ENCODE measurements at regions of chr12 and their contacts with region 1.

Region 1: DNA sequence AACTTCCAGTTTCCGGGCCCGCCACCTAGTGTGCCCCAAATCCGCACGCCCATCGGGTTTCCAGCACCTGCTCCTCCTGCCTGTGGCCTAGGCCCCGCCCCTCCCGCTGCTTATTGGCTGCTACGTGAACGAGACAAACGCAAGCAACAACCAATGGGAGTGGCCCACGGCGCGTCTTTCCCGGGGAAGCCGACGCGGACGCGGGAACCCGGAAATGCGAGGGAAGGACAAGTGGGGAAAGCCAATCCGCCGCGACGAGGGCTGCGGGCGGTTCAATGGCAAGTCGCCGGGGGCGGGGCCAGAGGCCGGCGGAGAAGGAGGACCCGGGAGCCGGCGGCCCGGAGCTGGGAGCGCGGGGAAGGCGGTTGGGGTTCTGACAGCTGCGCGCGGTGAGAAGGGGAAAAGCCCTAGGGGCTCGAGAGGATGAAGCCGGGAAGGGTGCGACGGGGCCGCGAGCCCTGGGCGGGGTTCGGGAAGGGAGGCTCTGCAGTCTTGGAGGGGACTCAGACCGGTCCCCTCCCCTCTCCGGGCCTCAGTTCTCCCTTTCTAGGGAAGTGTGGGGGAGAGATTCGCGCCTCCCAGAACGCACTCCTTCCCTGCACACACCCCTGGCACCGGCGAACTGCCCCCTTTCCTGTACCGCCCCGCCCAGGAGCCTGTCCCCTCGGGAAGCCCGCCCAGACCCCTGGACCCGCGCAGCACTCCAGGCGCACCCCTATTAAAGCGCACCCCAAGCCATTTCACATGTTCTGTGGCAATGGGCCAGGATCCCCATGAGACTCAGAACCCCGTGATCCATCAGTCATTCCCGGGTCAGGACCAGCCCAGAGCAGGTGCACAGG is at the start of gene FICD:
- DNase-seq: peak; percentile 100
- ATAC-seq: peak; percentile 95 to 98 (median 96)
- H3K4me3 ChIP-seq: peak within 1 kb of the TSS; percentile 61 to 97 (median 86)
- H3K27ac ChIP-seq: peak within 1 kb of the TSS in 11 of 12 donors; percentile 59 to 85 (median 76)
- H3K4me1 ChIP-seq: peaks cover 0 to 26% (median 10%) of the 10 kb centered on the region in 12 donors
- H3K27me3 ChIP-seq: no peaks in the 10 kb centered on the region
- CTCF ChIP-seq: no peak
- POLR2A ChIP-seq: peak in 1 of 2 donors; percentile 71
- total RNA-seq, gene FICD: 2.6 to 6.6 (median 3.5) TPM

Region 2: DNA sequence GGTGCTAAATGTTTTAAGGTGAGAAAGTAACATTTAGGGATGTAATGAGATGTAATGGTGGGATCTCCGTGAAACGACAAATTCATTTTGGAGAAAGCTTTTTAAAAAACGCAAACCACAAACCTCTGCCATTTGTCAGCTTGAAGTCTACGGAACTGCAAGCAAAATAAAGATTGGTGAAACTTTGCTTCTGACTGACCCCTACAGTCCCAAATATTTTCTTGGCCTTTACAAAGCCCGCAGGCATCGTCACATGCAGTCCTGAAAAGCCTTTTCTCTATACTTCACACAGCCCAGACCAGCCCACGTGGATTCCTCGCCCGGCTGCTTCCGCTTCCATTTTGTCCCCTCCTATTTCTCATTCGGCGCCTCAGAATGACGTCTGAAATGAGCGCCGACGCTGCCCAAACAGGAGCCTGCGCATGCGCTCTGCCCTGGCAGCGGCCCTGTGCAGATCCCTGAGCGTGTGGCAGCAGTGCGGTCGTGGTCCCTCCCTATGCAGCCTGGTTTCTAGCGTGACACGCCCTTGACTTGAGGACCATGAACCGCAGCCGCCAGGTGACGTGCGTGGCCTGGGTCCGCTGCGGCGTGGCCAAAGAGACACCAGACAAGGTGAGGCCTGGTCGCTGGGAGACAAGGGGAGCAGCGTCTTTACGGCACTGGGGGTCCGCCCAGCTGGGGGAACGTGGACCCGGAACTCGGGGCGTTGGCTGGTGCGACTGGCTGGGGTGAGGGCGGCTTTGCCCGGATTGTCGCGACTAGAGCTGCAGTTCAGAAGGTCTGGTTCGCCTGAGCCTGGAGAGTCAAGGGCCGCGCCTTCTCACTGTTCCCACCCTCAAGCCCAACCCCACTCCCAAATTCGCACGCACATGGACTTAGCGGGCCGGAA is 829.6 kb before region 1 on chr12 and contains the start of gene PWP1:
- intact Hi-C with region 1: loop called in 3 of 10 experiments (anchors 10 kb)
- DNase-seq: peak; percentile 93 to 98 (median 96)
- ATAC-seq: peak; percentile 95 to 99 (median 96)
- H3K4me3 ChIP-seq: peak within 1 kb of the TSS; percentile 70 to 99 (median 88)
- H3K27ac ChIP-seq: peak within 1 kb of the TSS in 11 of 12 donors; percentile 52 to 85 (median 73)
- H3K4me1 ChIP-seq: peaks cover 0 to 26% (median 18%) of the 10 kb centered on the region in 12 donors
- H3K27me3 ChIP-seq: no peaks in the 10 kb centered on the region
- CTCF ChIP-seq: peak in 1 of 12 donors; percentile 10
- POLR2A ChIP-seq: peak; percentile 7 to 67
- total RNA-seq, gene PWP1: 11.7 to 49.7 (median 17.0) TPM

Region 3: GRCh38 chr12:107760809-107761501 is 754.2 kb before region 1 on chr12 and contains the start of gene PRDM4:
- intact Hi-C with region 1: loop called in 2 of 10 experiments (anchors 5 to 10 kb)
- DNase-seq: peak; percentile 93 to 96 (median 96)
- ATAC-seq: peak; percentile 96 to 99 (median 98)
- H3K4me3 ChIP-seq: peak within 1 kb of the TSS; percentile 76 to 94 (median 85)
- H3K27ac ChIP-seq: peak within 1 kb of the TSS in 11 of 12 donors; percentile 59 to 87 (median 77)
- H3K4me1 ChIP-seq: peaks cover 5 to 35% (median 28%) of the 10 kb centered on the region in 12 donors
- H3K27me3 ChIP-seq: no peaks in the 10 kb centered on the region
- CTCF ChIP-seq: peak in 11 of 12 donors; percentile 13 to 66 (median 44)
- POLR2A ChIP-seq: peak; percentile 45 to 93
- total RNA-seq, gene PRDM4: 11.6 to 24.6 (median 15.0) TPM

Region 4: GRCh38 chr12:107917912-107918800 is 597.0 kb before region 1 on chr12:
- intact Hi-C with region 1: loop called in 3 of 10 experiments (anchors 5 kb)
- DNase-seq: no peak
- ATAC-seq: peak in 3 of 4 donors; percentile 28 to 48 (median 47)
- H3K4me3 ChIP-seq: no peak overlapping the region
- H3K27ac ChIP-seq: no peak overlapping the region
- H3K4me1 ChIP-seq: no peaks in the 10 kb centered on the region
- H3K27me3 ChIP-seq: peaks cover 0 to 57% (median 4%) of the 10 kb centered on the region in 9 donors
- CTCF ChIP-seq: peak; percentile 14 to 63 (median 49)
- POLR2A ChIP-seq: no peak

Region 5: GRCh38 chr12:107992870-107993451 is 522.2 kb before region 1 on chr12:
- intact Hi-C with region 1: loop called in 4 of 10 experiments (anchors 5 kb)
- DNase-seq: no peak
- ATAC-seq: peak in 1 of 4 donors; percentile 38
- H3K4me3 ChIP-seq: no peak overlapping the region
- H3K27ac ChIP-seq: no peak overlapping the region
- H3K4me1 ChIP-seq: no peaks in the 10 kb centered on the region
- H3K27me3 ChIP-seq: peaks cover 0 to 26% (median 3%) of the 10 kb centered on the region in 9 donors
- CTCF ChIP-seq: peak in 10 of 12 donors; percentile 5 to 45 (median 24)
- POLR2A ChIP-seq: no peak

Region 6: DNA sequence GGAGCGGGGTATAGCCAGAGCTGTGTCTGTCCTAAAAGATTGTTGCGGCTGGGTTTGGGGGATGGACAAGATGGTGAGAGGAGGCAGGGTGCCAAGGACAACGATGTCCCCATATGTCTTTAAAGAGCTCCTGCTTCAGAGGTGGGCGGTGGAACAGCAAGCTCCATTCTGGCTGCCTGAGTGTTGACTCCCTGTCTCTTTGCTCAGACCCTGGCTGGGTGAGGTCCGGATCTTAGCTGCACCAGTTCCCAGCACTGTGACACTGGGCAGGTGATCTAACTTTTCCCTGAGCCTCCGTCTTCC is 394.4 kb before region 1 on chr12:
- intact Hi-C with region 1: loop called in 1 of 10 experiments (anchors 5 kb)
- DNase-seq: no peak
- ATAC-seq: no peak
- H3K4me3 ChIP-seq: no peak overlapping the region
- H3K27ac ChIP-seq: no peak overlapping the region
- H3K4me1 ChIP-seq: no peaks in the 10 kb centered on the region
- H3K27me3 ChIP-seq: peaks cover 0 to 22% (median 0%) of the 10 kb centered on the region in 9 donors
- CTCF ChIP-seq: no peak
- POLR2A ChIP-seq: no peak

Region 7: GRCh38 chr12:108234158-108234557 is 281.0 kb before region 1 on chr12:
- intact Hi-C with region 1: loop called in 3 of 10 experiments (anchors 5 kb)
- DNase-seq: peak in 2 of 5 donors; percentile 26 to 29
- ATAC-seq: peak in 3 of 4 donors; percentile 68 to 75 (median 74)
- H3K4me3 ChIP-seq: no peak overlapping the region
- H3K27ac ChIP-seq: no peak overlapping the region
- H3K4me1 ChIP-seq: no peaks in the 10 kb centered on the region
- H3K27me3 ChIP-seq: peaks cover 0 to 31% (median 6%) of the 10 kb centered on the region in 9 donors
- CTCF ChIP-seq: peak in 9 of 12 donors; percentile 19 to 59 (median 46)
- POLR2A ChIP-seq: no peak

Measured in heart left ventricle (tissue), 16 donors.